Activated B cell treated with CpG ODN at 0.5 μM for 24 hours (primary cell): ENCODE measurements at regions of chr3 and their contacts with region 1.

Region 1: GRCh38 chr3:112794622-112795172 is 52.0 kb downstream of the CD200R1L start:
- DNase-seq: no peak
- ATAC-seq: peak; percentile 31
- H3K4me3 Mint-ChIP-seq: peak overlapping the region; percentile 12
- H3K27ac Mint-ChIP-seq: peak overlapping the region; percentile 46
- H3K4me1 Mint-ChIP-seq: peaks cover 27% of the 10 kb centered on the region
- H3K27me3 Mint-ChIP-seq: no peaks in the 10 kb centered on the region
- CTCF ChIP-seq: no peak

Region 2: GRCh38 chr3:112779558-112780480 is 14.9 kb before region 1 on chr3:
- CTCF ChIA-PET with region 1: no interaction called
- POLR2A ChIA-PET with region 1: no interaction called
- intact Hi-C with region 1: no loop called
- DNase-seq: no peak
- ATAC-seq: no peak
- H3K4me3 Mint-ChIP-seq: no peak overlapping the region
- H3K27ac Mint-ChIP-seq: no peak overlapping the region
- H3K4me1 Mint-ChIP-seq: peaks cover 24% of the 10 kb centered on the region
- H3K27me3 Mint-ChIP-seq: no peaks in the 10 kb centered on the region
- CTCF ChIP-seq: no peak

Region 3: GRCh38 chr3:113890256-113890900 is 1095.7 kb after region 1 on chr3:
- CTCF ChIA-PET with region 1: no interaction called
- POLR2A ChIA-PET with region 1: interaction called, 11 read pairs
- intact Hi-C with region 1: no loop called
- DNase-seq: no peak
- ATAC-seq: no peak
- H3K4me3 Mint-ChIP-seq: no peak overlapping the region
- H3K27ac Mint-ChIP-seq: no peak overlapping the region
- H3K4me1 Mint-ChIP-seq: no peaks in the 10 kb centered on the region
- H3K27me3 Mint-ChIP-seq: no peaks in the 10 kb centered on the region
- CTCF ChIP-seq: no peak